Activated naive CD4-positive, alpha-beta T cell treated with anti-CD3 and anti-CD28 coated beads for 36 hours (primary cell): ENCODE measurements at regions of chr1 and their contacts with region 1.

Region 1: GRCh38 chr1:241531195-241532161 is 700 bp upstream of the KMO start:
- DNase-seq: no peak
- H3K4me3 Mint-ChIP-seq: peak overlapping the region; percentile 85
- H3K27ac Mint-ChIP-seq: peak overlapping the region; percentile 92
- H3K4me1 Mint-ChIP-seq: peaks cover 15% of the 10 kb centered on the region
- H3K27me3 Mint-ChIP-seq: no peaks in the 10 kb centered on the region

Region 2: DNA sequence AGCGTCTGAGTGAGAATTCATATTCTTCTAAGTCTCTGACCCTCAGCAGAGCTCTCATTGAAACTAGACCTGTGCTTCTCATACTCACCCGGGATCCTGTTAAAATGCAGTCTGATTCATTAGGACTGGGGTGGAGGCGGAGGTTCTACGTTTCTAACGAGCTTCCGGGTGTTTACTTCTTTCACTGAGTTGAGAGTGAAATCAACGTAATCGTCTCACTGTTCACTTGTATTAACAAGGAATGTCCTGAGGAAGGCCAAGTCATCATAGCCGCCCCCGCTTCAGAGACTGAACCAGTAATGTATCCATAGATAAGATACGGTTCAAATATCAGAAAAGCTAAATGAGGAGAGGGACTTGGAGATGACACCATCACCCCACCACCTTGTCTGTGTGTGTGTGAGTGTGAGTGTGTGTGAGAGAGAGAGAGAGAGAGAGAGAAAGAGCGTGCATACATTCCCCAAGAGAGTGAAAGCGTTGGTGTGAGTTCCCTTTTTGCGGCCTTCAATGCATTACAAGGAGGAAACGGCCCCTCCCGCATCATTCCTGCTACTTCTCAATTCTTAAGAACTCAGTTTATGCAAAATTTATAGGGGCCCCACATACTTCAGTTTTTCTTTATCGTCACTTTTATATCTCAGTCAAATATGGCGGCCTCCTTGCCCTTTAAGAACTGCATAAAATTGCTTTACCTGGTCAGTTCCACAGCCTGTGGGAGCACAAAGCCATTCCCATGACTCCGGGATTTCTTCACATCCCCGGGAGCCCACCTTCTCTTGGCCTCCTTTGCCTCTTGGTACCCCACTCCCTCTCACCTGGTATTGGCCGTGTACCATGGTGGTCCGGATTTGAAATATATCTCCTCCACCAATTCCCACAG is 20.5 kb after region 1 on chr1:
- CTCF ChIA-PET with region 1: interaction called, 5 read pairs
- intact Hi-C with region 1: loop called (anchors 1 kb)
- DNase-seq: peak; percentile 75
- H3K4me3 Mint-ChIP-seq: peak overlapping the region; percentile 67
- H3K27ac Mint-ChIP-seq: peak overlapping the region; percentile 89
- H3K4me1 Mint-ChIP-seq: peaks cover 20% of the 10 kb centered on the region
- H3K27me3 Mint-ChIP-seq: peaks cover 2% of the 10 kb centered on the region

Region 3: DNA sequence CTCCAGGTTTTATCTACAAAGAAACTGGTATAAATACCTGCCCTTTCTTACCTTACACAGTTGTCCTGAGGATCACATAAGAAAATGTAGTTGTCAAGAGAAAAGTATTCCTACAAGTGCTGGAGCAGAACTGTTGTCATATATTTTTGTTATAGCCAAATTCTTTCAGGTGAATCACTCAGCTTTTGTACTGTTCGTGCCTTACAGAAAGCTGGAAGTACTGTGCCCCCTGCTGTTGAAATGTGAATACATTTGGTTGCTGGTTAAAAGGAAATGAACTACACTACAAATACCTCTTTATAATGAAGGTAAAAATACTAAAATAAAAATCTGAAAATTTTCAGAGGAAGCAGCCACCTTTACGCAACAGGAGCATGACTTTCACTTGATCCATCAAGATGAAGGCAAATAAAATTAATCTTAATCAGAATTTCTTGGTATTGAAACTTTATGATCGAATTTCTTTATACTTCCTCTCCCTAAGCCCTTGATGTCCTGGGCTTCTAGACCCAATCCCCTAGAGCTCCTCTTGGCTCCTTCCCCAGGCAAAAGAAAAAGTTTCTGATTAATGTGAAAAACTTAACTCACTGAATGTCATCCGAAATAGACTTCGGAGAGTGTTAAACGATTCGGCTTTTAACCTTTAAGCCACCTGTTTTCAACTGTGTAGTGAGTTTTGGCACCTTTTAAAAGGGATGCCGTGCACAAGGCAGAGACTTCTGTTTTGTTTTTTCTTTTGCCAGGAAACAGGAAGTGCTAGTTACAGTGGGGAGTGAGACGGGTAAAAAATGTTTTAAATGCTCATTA is 96.2 kb after region 1 on chr1:
- CTCF ChIA-PET with region 1: interaction called, 6 read pairs
- intact Hi-C with region 1: loop called (anchors 1 kb)
- DNase-seq: peak; percentile 69
- H3K4me3 Mint-ChIP-seq: peak overlapping the region; percentile 49
- H3K27ac Mint-ChIP-seq: peak overlapping the region; percentile 79
- H3K4me1 Mint-ChIP-seq: peaks cover 31% of the 10 kb centered on the region
- H3K27me3 Mint-ChIP-seq: no peaks in the 10 kb centered on the region

Region 4: GRCh38 chr1:241666419-241666818 is 134.9 kb after region 1 on chr1:
- CTCF ChIA-PET with region 1: no interaction called
- intact Hi-C with region 1: no loop called
- DNase-seq: no peak
- H3K4me3 Mint-ChIP-seq: no peak overlapping the region
- H3K27ac Mint-ChIP-seq: no peak overlapping the region
- H3K4me1 Mint-ChIP-seq: peaks cover 34% of the 10 kb centered on the region
- H3K27me3 Mint-ChIP-seq: no peaks in the 10 kb centered on the region

Region 5: GRCh38 chr1:241834733-241835377 is 303.4 kb after region 1 on chr1:
- CTCF ChIA-PET with region 1: no interaction called
- intact Hi-C with region 1: loop called (anchors 1 kb)
- DNase-seq: no peak
- H3K4me3 Mint-ChIP-seq: no peak overlapping the region
- H3K27ac Mint-ChIP-seq: no peak overlapping the region
- H3K4me1 Mint-ChIP-seq: peaks cover 11% of the 10 kb centered on the region
- H3K27me3 Mint-ChIP-seq: no peaks in the 10 kb centered on the region

Region 6: DNA sequence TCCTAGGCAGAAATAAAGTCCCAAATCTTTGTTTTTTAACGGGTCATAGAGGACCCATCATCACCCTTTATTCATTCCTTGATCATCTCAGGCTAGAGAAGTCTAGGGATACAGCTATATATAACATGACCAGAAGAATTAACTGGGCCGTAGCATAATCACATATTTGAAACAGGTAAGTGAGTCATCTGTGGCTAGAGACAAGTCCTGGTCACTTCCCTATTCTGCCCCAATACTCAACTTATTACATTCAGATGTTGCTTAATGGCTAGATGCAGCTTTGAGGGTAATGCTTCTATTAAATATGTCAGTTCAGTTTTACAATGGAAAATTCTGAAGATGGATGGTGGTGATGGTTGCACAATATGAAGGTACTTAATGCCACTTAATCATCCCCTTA is 363.5 kb after region 1 on chr1:
- CTCF ChIA-PET with region 1: interaction called, 4 read pairs
- intact Hi-C with region 1: loop called (anchors 1 kb)
- DNase-seq: no peak
- H3K4me3 Mint-ChIP-seq: no peak overlapping the region
- H3K27ac Mint-ChIP-seq: no peak overlapping the region
- H3K4me1 Mint-ChIP-seq: no peaks in the 10 kb centered on the region
- H3K27me3 Mint-ChIP-seq: no peaks in the 10 kb centered on the region

Region 7: GRCh38 chr1:242017584-242018233 is 486.2 kb after region 1 on chr1:
- CTCF ChIA-PET with region 1: no interaction called
- intact Hi-C with region 1: loop called (anchors 1 kb)
- DNase-seq: peak; percentile 43
- H3K4me3 Mint-ChIP-seq: no peak overlapping the region
- H3K27ac Mint-ChIP-seq: no peak overlapping the region
- H3K4me1 Mint-ChIP-seq: no peaks in the 10 kb centered on the region
- H3K27me3 Mint-ChIP-seq: no peaks in the 10 kb centered on the region